Right ventricle myocardium superior (tissue), 1 donor: ENCODE measurements at regions of chr14 and their contacts with region 1.

Region 1: DNA sequence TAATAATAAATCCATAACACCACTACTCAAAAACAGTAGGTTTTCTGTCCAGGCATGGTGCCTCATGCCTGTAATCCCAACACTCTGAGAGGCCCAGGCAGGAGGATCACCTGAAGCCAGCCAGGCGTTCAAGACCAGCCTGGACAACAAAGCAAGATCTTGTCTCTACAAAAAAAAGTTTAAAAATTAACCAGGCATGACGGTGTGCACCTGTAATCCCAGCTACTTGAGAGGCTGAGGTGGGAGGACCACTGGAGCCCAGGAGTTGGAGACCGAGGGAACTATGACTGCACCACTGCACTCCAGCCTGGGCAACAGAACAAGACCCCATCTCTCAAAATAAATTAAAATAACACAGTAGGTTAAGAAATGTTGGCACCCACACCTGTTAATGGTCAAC is 44.5 kb upstream of the AP4S1 start:
- DNase-seq: no peak
- ATAC-seq: no peak

Region 2: DNA sequence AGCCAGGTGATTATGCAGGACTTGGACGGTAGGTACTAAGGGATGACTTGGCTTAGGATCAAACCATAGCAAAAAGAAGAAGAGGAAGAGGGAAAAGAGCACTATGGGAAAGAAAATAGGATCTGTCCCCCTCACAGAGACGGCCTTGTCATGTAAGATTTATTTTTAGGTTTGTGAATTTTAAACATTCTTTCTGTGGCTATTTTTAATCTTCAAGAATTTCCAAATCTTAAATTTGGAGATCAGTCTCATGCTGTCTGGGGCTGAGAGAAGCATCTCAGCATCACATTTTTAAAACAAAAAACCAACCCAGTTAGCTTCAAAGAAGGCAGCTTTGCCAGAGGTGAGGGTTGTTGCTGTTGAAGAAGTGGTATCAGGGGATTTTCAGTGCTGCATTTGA is 97.8 kb after region 1 on chr14:
- intact Hi-C with region 1: loop called (anchors 2 kb)
- DNase-seq: no peak
- ATAC-seq: no peak